Endothelial cell of umbilical vein (primary cell): ENCODE measurements at regions of chr7 and their contacts with region 1.

Region 1: GRCh38 chr7:2209146-2209960 is 23.4 kb downstream of the MAD1L1 start:
- DNase-seq: peak; percentile 55
- H3K4me3 ChIP-seq: no peak overlapping the region
- H3K27ac ChIP-seq: no peak overlapping the region
- H3K4me1 ChIP-seq: no peaks in the 10 kb centered on the region
- H3K27me3 ChIP-seq: no peaks in the 10 kb centered on the region
- CTCF ChIP-seq: peak; percentile 69 to 93
- POLR2A ChIP-seq: no peak

Region 2: GRCh38 chr7:1579481-1580421 is 629.6 kb before region 1 on chr7:
- CTCF ChIA-PET with region 1: interaction called, 25 read pairs
- POLR2A ChIA-PET with region 1: no interaction called
- dilution Hi-C with region 1: no loop called
- intact Hi-C with region 1: loop called (anchors 1 kb)
- DNase-seq: peak; percentile 50
- H3K4me3 ChIP-seq: no peak overlapping the region
- H3K27ac ChIP-seq: no peak overlapping the region
- H3K4me1 ChIP-seq: no peaks in the 10 kb centered on the region
- H3K27me3 ChIP-seq: no peaks in the 10 kb centered on the region
- CTCF ChIP-seq: peak; percentile 67 to 93
- POLR2A ChIP-seq: no peak

Region 3: GRCh38 chr7:1664711-1665548 is 544.4 kb before region 1 on chr7:
- CTCF ChIA-PET with region 1: interaction called, 36 read pairs
- POLR2A ChIA-PET with region 1: no interaction called
- dilution Hi-C with region 1: no loop called
- intact Hi-C with region 1: loop called (anchors 2 kb)
- DNase-seq: peak; percentile 66
- H3K4me3 ChIP-seq: peak overlapping the region; percentile 33 to 67 (median 43)
- H3K27ac ChIP-seq: no peak overlapping the region
- H3K4me1 ChIP-seq: peaks cover 3% of the 10 kb centered on the region
- H3K27me3 ChIP-seq: peaks cover 32 to 35% of the 10 kb centered on the region in 2 experiments
- CTCF ChIP-seq: peak; percentile 59 to 87
- POLR2A ChIP-seq: no peak

Region 4: DNA sequence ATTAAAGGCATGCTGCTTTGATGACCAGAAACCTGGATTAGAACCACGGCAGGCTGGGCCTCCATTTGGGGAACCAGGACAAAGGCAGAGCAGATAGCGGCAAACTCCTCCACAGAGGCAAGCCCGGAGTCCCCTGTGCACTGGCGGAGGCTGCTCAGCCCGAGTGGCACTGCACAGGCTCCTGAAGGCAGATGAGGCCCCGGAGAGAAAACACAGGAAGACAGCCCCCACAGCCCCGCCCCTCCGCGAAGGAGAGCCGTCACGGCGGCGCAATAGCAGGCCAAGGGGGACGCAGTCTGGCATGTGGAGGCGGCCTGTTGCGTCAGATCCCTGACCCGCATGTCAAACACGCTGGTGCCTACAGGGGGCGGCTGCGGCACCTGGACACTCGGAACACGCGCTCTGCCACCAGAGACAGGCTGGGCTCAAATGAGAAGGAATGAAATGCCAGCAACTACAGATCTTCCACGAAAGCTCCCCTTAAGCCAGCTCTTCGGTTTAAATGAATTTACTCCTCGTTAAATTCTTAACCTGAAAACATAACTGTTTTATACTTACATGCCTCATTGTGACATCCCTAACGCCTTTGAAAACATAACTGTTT is 105.1 kb before region 1 on chr7:
- CTCF ChIA-PET with region 1: interaction called, 6 read pairs
- POLR2A ChIA-PET with region 1: no interaction called
- dilution Hi-C with region 1: no loop called
- intact Hi-C with region 1: loop called (anchors 2 kb)
- DNase-seq: peak; percentile 87
- H3K4me3 ChIP-seq: no peak overlapping the region
- H3K27ac ChIP-seq: no peak overlapping the region
- H3K4me1 ChIP-seq: peaks cover 9% of the 10 kb centered on the region
- H3K27me3 ChIP-seq: no peaks in the 10 kb centered on the region
- CTCF ChIP-seq: peak; percentile 75 to 86
- POLR2A ChIP-seq: no peak